ENCODE measurements at regions of chr1 and their contacts with region 1.

Region 1: DNA sequence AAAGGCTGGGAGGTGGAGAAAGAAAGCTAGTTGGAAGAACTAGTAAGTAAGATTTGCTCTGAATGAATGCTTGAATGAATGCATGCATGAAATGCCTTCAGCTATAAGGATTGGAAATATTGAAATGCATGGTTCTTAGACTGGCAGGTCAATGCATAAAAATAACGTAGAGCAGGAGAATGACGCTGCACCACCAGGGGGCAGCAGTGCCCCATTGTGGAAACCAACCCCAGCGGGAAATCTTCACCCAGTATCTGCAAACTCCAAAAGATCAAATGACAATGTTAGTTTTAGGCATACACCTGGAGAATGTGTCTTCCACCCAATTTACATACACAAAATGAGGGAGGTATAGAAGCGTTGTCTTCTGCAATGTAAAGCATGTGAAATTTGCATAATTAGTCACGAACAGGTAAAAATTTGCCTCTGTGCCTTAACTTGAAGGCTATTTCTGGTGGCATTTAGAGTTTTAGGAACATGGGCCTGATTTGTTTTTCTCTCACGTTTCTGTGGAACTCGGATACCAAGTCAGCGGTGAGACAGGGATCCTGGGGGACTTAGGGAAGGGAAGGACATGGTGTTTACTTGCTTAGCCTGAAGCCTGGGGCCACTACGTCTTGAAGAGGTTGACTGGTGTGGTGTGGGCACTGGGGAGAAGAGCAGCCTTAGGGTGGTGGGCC is 78.6 kb downstream of the HHAT start:
- H3K4me3 ChIP-seq: no peak overlapping the region
- H3K27ac ChIP-seq: no peak overlapping the region
- H3K4me1 ChIP-seq: peaks cover 4% of the 10 kb centered on the region; the same call in 1 of the 2 replicates
- CTCF ChIP-seq: peak; percentile 81

Region 2: DNA sequence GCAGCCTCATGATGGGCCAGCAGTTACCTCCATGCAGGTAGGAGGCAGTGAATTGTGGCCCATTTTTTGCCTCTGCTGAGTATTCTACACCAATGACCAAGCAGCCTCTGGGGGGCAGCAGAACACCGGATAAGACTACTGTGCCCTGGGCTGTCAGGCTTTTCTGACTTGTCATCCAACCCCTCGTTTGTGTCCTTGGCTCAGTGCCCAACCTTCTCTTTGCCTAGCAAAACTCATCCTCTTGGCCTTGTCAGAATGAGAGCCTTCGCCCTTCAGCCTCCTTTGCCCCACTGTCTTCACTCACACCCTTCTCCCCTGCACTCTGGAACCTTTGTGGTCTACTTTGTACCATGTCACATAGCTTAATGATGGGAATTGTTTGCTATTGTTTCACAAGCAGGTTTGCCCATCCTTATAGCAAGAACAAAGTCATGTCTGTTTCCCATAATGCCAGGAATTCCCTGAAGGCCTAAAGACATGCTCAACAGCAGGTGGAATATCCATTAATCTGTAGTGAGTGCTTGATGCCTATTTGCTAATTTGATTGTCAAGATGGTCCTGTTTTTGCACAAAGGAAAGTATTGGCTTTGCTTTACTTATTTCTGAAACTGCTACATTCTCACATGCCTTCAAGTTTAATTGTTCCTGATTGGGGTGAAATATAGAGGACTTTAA is 177.2 kb after region 1 on chr1:
- CTCF ChIA-PET with region 1: interaction called, 10 read pairs
- POLR2A ChIA-PET with region 1: no interaction called
- H3K4me3 ChIP-seq: no peak overlapping the region
- H3K27ac ChIP-seq: no peak overlapping the region
- H3K4me1 ChIP-seq: peaks cover 2% of the 10 kb centered on the region; the same call in 1 of the 2 replicates
- CTCF ChIP-seq: peak; percentile 85

Region 3: DNA sequence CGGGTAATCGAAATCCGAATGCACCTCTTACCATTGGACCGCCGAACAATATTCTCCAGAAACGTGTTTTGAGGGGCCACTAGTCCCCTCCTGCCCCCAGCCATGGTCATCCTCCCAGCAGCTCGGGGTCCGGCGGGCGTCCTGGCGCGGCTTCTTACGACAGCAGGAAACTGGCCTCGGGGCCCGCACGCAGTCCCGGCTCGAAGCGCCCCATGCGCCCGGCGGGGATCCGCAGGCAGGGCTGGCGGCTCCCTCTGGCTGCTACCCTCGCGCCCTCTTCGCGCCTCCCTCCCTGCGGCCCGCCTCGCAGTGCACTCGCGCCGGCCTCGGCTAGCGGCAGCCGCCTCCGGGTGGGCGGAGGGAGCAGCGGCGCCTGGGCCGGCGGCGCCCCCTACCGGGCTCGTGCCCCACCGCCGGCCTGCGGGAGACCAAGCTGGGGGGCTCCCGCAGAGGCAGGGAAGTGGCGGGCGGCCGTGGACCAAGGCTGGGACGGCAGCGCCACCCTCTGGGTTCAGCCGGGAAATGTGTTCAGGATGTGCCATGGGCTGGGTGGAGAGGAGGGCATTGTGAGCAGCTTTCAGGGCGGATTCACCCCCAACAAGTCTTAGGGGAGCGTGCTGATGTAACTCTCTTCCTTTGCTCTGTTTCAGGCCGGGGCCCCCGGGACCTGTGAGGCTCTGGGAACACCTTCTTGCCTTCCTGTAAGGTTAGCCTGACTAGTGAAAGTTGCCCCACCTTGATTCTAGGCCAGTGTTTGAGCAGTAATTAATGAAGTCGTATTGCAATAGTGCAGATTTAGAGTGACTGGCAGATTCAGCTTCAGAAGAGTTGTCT is 726.7 kb after region 1 on chr1 and contains the start of gene KCNH1:
- CTCF ChIA-PET with region 1: interaction called, 94 read pairs
- POLR2A ChIA-PET with region 1: no interaction called
- H3K4me3 ChIP-seq: peak within 1 kb of the TSS; percentile 43
- H3K27ac ChIP-seq: no peak within 1 kb of the TSS; the same call in 1 of the 2 replicates
- H3K4me1 ChIP-seq: no peaks in the 10 kb centered on the region
- CTCF ChIP-seq: peak; percentile 89